ENCODE measurements at regions of chr14 and their contacts with region 1.

Region 1: DNA sequence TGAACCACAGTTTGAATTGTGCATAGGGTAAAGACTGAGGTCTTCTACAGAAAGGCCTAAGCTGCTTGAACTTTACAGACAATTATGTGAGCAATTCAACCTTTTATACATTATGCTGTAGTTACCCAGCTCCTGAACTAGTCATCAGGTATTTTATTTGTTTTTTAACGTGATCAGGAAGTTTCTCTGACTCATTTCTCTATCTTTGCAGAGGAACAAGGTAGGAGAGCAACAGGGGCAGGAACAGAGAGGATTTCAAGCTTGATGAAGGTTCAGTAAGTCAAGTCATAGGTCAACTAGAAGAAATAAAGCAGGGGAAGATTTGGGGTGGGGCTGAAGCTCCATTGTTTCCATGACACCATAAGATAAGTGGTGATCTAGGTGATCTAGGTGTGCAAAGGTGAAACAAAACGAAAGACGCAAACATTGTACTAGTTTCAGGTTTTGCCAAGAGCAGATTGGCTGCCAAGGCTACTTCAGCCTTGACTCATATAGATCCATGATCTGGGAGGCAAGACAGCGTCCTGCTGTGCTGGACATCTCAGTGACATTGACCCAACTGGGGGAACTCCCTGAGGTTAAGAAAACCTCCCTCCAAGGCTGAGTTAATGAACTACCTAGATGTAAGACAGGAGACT is 198.1 kb downstream of the DAD1 start:
- DNase-seq: no peak
- ATAC-seq: no peak

Region 2: DNA sequence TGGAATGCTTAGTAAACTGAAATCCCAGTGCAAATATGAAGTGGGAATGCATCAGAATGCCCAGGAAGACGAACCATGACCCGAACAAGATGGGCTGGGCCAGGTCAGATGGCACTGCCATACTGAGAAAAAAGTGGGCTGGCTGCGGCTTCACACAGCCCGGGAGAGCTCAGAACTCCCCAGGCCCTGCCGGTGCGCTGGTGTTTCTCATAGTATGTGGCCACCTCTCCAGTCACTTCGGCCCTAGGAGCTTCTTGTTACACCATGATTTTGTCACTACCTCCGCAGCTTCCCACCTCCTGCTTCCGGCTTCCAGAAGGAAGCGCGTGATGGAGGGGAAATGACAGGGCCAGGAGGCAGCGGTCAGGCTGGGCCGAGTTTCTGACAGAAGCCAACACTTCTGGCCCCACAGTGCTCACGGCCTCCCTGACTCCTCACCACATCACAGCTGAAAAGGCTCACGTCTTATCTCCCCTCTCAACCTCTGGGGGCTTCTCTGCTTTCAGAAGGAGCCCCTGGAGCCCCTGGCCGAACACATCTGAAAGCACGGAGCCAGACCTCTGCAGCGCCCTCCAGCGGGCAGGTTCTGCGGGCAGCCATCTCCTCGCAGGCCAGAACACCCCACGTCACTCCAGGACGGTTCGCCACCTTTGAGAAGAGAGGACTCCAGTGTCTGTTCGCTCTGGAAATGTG is 167.4 kb after region 1 on chr14:
- intact Hi-C with region 1: loop called (anchors 1 kb)
- DNase-seq: no peak
- ATAC-seq: no peak

Measured in sciatic nerve (tissue), 2 donors.